Naive thymus-derived CD4-positive, alpha-beta T cell (primary cell): ENCODE measurements at regions of chr3 and their contacts with region 1.

Region 1: DNA sequence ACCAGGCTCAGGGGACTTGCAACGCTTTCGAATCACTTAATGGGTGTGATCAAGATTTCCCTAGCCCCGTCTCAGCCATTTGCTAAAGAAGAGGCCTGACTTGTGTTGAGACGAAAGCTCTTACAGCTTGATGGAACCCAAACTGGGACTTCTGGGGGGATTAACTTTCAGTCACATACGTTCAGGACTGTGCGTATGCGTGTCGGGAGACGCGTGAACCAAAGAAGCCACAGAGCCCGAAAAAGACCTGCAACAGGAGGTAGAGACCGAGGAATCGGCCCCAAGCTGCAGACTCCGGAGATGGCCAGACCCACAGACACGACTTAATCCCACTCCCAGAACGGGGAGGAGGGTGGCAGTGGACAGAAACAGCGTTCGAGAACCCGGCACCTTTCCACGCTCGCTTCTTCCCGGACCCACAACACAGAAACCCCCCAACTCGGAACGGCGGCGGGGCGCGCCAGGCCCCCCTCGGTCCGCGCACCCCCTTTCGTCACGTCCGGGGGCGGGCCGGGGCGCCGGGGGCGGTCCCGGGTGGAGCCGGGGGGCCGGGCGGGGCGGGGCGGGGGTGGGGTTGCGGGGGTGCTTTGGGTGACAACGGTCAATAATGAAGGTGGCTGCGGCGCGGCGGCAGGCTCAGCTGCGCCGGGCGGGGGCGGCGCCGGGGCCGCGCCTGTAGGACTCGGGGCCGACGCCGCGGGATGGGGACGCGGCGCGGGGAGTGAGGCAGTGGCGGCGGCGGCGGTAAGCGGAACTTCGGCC is at the start of gene ATP11B:
- DNase-seq: peak; percentile 72 to 90 (median 83)
- ATAC-seq: peak; percentile 92
- H3K4me3 ChIP-seq: peak within 1 kb of the TSS; percentile 98
- H3K4me3 Mint-ChIP-seq: peak within 1 kb of the TSS; percentile 97 to 100 (median 100)
- H3K27ac ChIP-seq: peak within 1 kb of the TSS; percentile 97
- H3K27ac Mint-ChIP-seq: peak within 1 kb of the TSS; percentile 96 to 100 (median 100)
- H3K4me1 ChIP-seq: peaks cover 21 to 22% of the 10 kb centered on the region in 2 donors
- H3K4me1 Mint-ChIP-seq: peaks cover 20 to 43% (median 28%) of the 10 kb centered on the region in 7 donors
- H3K27me3 ChIP-seq: no peaks in the 10 kb centered on the region
- H3K27me3 Mint-ChIP-seq: no peaks in the 10 kb centered on the region
- total RNA-seq, gene ATP11B: 111 to 136 (median 114) TPM

Region 2: GRCh38 chr3:180912304-180913296 is 1880.5 kb before region 1 on chr3 and contains the start of gene FXR1:
- CTCF ChIA-PET with region 1: no interaction called
- POLR2A ChIA-PET with region 1: no interaction called
- intact Hi-C with region 1: loop called (anchors 2 kb)
- DNase-seq: peak; percentile 80 to 91 (median 89)
- ATAC-seq: peak; percentile 95
- H3K4me3 ChIP-seq: peak within 1 kb of the TSS; percentile 80
- H3K4me3 Mint-ChIP-seq: peak within 1 kb of the TSS; percentile 91 to 98 (median 96)
- H3K27ac ChIP-seq: peak within 1 kb of the TSS; percentile 97
- H3K27ac Mint-ChIP-seq: peak within 1 kb of the TSS; percentile 94 to 100 (median 97)
- H3K4me1 ChIP-seq: peaks cover 17 to 25% of the 10 kb centered on the region in 2 donors
- H3K4me1 Mint-ChIP-seq: peaks cover 35 to 76% (median 67%) of the 10 kb centered on the region in 7 donors
- H3K27me3 ChIP-seq: no peaks in the 10 kb centered on the region
- H3K27me3 Mint-ChIP-seq: no peaks in the 10 kb centered on the region
- total RNA-seq, gene FXR1: 108 to 151 (median 129) TPM

Region 3: DNA sequence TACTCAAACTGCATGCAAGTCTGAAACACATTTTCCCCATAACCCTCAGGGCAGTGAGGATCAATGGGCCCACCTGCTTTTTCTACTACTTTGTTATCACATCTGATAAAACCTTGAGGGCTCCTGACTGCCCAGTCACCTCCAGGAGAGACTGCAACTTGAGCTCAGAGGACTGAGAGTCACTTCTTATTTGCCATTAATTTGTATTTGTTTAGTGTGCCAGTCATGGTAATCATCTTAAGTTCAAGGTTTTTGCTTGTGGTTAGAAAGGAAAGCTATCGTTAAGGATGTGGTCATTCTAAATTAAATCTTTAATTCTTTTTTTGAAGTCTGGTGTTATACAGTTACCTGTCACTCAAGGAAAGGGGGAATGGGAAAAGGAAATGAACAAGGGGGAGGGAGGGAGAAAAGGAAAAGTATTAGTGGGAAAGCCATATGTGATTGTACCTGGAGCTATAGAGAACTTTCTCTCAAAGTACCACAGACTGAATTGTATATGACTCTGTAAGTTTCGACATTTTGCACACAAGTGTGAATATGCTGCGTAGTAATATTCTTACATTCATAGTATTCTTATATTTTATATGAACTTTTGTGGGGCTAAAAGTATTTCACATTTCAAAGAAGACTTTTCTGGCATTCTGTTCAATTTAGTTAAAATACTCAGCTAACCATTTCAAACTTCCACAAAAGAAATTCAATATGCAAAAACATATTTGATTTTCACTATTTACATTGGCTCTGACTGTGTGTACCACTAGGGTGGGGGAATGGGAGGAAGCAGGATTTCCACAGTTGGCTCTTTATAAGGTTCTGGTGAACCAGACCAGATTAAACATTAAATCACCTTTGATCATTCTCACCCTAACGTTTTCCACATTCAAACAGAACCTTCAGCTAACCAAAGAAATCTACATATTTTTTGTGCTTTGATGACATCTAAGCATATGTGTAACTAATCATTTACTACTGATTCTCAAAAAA is 166.3 kb before region 1 on chr3:
- CTCF ChIA-PET with region 1: no interaction called
- POLR2A ChIA-PET with region 1: no interaction called
- intact Hi-C with region 1: no loop called
- DNase-seq: no peak
- ATAC-seq: no peak
- H3K4me3 ChIP-seq: no peak overlapping the region
- H3K4me3 Mint-ChIP-seq: no peak overlapping the region
- H3K27ac ChIP-seq: no peak overlapping the region
- H3K27ac Mint-ChIP-seq: no peak overlapping the region
- H3K4me1 ChIP-seq: no peaks in the 10 kb centered on the region
- H3K4me1 Mint-ChIP-seq: no peaks in the 10 kb centered on the region
- H3K27me3 ChIP-seq: no peaks in the 10 kb centered on the region
- H3K27me3 Mint-ChIP-seq: peaks cover 1 to 12% (median 10%) of the 10 kb centered on the region in 5 donors

Region 4: DNA sequence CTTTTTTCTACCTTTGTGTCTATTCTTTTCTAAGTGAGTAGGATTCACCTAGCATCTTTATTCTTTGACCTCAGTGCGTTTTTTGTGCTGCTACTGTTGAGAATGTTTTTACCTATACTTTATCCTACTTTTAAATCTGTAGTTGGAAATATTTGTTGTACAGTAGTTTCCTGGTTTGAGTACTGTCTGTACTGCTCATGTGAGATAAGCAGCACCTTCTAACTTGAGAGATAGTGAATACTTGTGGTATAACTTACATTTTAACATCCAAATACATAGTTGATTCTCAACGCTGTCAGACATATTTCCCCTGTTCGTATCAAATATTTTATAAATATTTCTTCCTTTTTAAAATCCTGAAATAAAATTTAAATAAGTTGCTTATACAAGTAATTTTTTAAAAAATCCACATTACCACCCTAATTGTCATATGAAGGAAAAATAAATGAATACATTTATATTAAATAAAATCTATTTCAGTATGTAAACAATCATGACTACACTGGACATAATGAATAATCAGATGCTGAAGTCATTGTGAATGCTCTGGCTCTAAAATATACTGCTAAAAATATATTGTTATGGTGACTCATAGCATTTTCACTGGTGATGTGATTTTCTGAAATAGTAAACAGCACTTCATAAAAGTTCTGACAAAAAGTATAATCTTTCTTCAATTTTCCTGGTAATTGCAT is 17.6 kb after region 1 on chr3:
- CTCF ChIA-PET with region 1: no interaction called
- POLR2A ChIA-PET with region 1: interaction called, 22 read pairs
- intact Hi-C with region 1: loop called (anchors 1 to 2 kb)
- DNase-seq: no peak
- ATAC-seq: no peak
- H3K4me3 ChIP-seq: no peak overlapping the region
- H3K4me3 Mint-ChIP-seq: peak overlapping the region in 3 of 10 donors; percentile 13 to 59 (median 44)
- H3K27ac ChIP-seq: no peak overlapping the region
- H3K27ac Mint-ChIP-seq: peak overlapping the region in 1 of 9 donors; percentile 55
- H3K4me1 ChIP-seq: peaks cover 13 to 36% of the 10 kb centered on the region in 2 donors
- H3K4me1 Mint-ChIP-seq: peaks cover 43 to 96% (median 84%) of the 10 kb centered on the region in 7 donors
- H3K27me3 ChIP-seq: no peaks in the 10 kb centered on the region
- H3K27me3 Mint-ChIP-seq: no peaks in the 10 kb centered on the region

Region 5: DNA sequence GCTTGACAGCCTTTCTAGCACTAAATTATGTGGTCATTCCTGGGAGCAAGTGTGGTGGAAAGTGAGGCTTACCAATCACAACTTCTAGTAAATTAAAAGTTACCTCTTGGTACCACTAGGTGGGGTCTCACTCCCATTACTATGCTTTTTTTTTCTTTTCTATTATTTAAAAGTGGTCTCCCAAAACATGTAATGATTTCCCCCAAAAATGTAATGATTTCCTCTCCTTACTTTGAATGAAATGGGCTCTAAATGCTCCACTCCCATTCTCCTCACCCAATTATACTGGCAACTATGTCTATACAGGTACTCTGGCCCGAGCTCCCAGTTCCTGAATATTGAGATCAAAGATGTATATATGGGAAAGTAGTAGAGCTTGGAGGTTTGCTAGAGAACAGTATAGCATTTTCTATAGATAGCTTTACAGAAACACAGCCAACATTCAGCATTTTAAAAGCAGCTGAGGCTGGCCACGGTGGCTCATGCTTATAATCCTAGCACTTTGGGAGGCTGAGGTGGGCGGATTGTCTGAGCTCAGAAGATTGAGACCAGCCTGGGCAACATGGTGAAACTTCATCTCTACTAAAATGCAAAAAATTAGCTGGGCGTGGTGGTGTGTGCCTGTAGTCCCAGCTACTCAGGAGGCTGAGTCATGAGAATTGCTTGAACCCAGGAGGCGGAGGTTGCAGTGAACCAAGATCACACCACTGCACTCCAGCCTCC is 116.4 kb after region 1 on chr3:
- CTCF ChIA-PET with region 1: no interaction called
- POLR2A ChIA-PET with region 1: no interaction called
- intact Hi-C with region 1: loop called in 1 of 2 experiments (anchors 2 kb)
- DNase-seq: peak in 1 of 9 donors; percentile 16
- ATAC-seq: peak; percentile 46
- H3K4me3 ChIP-seq: no peak overlapping the region
- H3K4me3 Mint-ChIP-seq: no peak overlapping the region
- H3K27ac ChIP-seq: peak overlapping the region; percentile 16
- H3K27ac Mint-ChIP-seq: peak overlapping the region in 8 of 9 donors; percentile 20 to 88 (median 72)
- H3K4me1 ChIP-seq: peaks cover 15 to 17% of the 10 kb centered on the region in 2 donors
- H3K4me1 Mint-ChIP-seq: peaks cover 22 to 50% (median 42%) of the 10 kb centered on the region in 7 donors
- H3K27me3 ChIP-seq: no peaks in the 10 kb centered on the region
- H3K27me3 Mint-ChIP-seq: no peaks in the 10 kb centered on the region

Region 6: GRCh38 chr3:183285828-183286457 is 492.9 kb after region 1 on chr3:
- CTCF ChIA-PET with region 1: no interaction called
- POLR2A ChIA-PET with region 1: no interaction called
- intact Hi-C with region 1: loop called in 1 of 2 experiments (anchors 5 kb)
- DNase-seq: peak; percentile 60 to 96 (median 83)
- ATAC-seq: peak; percentile 97
- H3K4me3 ChIP-seq: no peak overlapping the region
- H3K4me3 Mint-ChIP-seq: peak overlapping the region in 9 of 10 donors; percentile 47 to 81 (median 68)
- H3K27ac ChIP-seq: peak overlapping the region; percentile 44
- H3K27ac Mint-ChIP-seq: peak overlapping the region; percentile 73 to 93 (median 86)
- H3K4me1 ChIP-seq: peaks cover 14 to 19% of the 10 kb centered on the region in 2 donors
- H3K4me1 Mint-ChIP-seq: peaks cover 0 to 30% (median 18%) of the 10 kb centered on the region in 7 donors
- H3K27me3 ChIP-seq: no peaks in the 10 kb centered on the region
- H3K27me3 Mint-ChIP-seq: no peaks in the 10 kb centered on the region

Region 7: GRCh38 chr3:183697610-183698317 is 904.7 kb after region 1 on chr3 and contains the start of gene YEATS2:
- CTCF ChIA-PET with region 1: no interaction called
- POLR2A ChIA-PET with region 1: no interaction called
- intact Hi-C with region 1: loop called in 1 of 2 experiments (anchors 5 kb)
- DNase-seq: peak; percentile 60 to 81 (median 74)
- ATAC-seq: peak; percentile 95
- H3K4me3 ChIP-seq: peak within 1 kb of the TSS; percentile 89
- H3K4me3 Mint-ChIP-seq: peak within 1 kb of the TSS; percentile 84 to 99 (median 94)
- H3K27ac ChIP-seq: peak within 1 kb of the TSS; percentile 84
- H3K27ac Mint-ChIP-seq: peak within 1 kb of the TSS; percentile 74 to 97 (median 90)
- H3K4me1 ChIP-seq: peaks cover 9 to 18% of the 10 kb centered on the region in 2 donors
- H3K4me1 Mint-ChIP-seq: peaks cover 32 to 50% (median 40%) of the 10 kb centered on the region in 7 donors
- H3K27me3 ChIP-seq: no peaks in the 10 kb centered on the region
- H3K27me3 Mint-ChIP-seq: no peaks in the 10 kb centered on the region
- total RNA-seq, gene YEATS2: 20.6 to 61.4 (median 21.9) TPM